HEK293T (cell line): ENCODE measurements at regions of chrX and their contacts with region 1.

Region 1: GRCh38 chrX:123779908-123780396 is 47.1 kb upstream of the THOC2 start:
- DNase-seq: peak; percentile 32

Region 2: GRCh38 chrX:123399709-123400108 is 380.2 kb before region 1 on chrX:
- CTCF ChIA-PET with region 1: no interaction called
- POLR2A ChIA-PET with region 1: no interaction called
- DNase-seq: no peak

Region 3: GRCh38 chrX:123732670-123733363 is 47.1 kb before region 1 on chrX and contains the start of gene THOC2:
- CTCF ChIA-PET with region 1: interaction called, 4 read pairs
- POLR2A ChIA-PET with region 1: interaction called, 10 read pairs
- DNase-seq: peak; percentile 87

Region 4: GRCh38 chrX:123743312-123743711 is 36.6 kb before region 1 on chrX:
- CTCF ChIA-PET with region 1: no interaction called
- POLR2A ChIA-PET with region 1: no interaction called
- DNase-seq: no peak

Region 5: DNA sequence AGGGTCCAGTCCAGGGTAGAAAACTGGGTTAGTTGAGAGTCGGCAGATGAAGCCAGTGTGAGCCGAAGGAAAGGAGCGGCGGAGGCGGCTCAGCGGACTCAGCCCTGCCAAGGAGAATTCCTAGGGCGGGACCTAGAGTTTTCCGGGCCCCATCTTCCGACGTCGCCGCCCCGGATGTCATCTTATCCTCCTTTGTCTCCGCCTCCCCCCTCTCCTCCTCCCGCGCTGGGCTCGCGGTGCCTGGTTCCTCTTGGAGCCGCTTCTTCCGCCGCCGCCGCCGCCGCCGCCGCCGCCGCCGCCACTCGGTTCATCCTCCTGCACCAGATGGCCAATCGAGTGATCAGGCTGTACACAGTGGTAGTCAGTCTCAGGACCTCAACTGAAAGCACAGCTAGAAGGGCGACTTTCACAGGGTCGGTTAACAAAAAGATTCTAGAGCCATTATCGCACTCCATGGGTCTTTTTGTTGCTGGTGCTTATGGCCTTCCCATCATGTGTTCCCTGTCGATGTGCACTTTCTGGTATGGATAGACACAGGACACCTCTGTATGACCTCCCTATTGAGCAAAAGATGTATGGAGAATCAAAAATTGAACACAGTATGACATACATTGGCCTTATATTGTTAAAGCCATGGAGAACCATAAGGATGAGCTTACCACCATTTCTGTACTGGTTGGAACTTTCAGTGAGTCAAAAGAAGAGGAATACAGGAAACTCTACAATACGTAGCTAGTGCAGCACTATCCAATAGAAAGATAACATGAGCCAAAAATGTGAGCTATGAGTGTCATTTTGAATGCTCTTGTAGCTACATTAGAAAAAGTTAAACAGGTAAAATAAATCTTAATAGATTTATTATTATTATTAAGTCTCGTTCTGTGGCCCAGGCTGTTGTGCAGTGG is 14.7 kb before region 1 on chrX:
- CTCF ChIA-PET with region 1: interaction called, 29 read pairs
- POLR2A ChIA-PET with region 1: interaction called, 13 read pairs
- DNase-seq: peak; percentile 88

Region 6: DNA sequence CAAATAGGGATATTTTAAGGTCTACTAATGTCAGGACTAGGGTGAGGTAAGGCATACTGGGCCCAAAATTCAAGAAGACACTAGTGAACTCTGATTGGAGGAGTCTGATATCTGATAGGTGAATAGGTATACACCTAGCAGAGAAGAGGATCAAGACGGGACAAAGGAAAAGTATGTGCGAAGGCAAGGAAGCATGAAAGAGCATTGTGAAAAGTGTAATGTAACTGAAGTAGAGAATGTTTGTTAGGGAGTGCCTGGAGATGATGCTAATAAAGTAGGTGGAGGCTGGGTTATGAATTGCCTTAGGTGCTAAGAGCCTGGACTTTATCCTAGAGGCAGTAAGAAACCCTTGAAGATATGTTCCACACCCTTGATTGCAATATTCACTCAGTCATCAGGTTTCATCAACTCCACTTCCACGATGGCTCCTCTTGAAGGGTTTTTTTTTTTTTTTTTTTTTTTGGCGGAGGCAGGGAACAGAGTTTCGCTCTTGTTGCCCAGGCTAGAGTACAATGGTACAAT is 30.0 kb after region 1 on chrX:
- CTCF ChIA-PET with region 1: interaction called, 10 read pairs
- POLR2A ChIA-PET with region 1: no interaction called
- DNase-seq: no peak

Region 7: DNA sequence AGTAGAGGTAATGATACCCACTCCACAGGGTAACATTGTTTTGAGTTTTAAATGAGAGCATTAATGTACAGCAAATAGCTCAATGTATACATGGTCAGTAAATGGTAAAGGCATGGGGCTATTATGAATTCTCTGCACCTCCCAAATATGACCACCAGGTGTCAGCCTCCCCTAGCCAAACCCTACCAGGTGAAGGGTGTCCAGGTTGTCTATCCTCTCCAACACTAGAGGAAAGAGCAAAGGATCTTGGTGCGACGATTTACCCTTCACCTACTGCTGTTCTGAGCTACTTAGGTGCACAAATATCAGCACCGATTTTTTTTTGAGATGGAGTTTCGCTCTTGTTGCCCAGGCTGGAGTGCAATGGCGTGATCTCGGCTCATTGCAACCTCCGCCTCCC is 53.4 kb after region 1 on chrX:
- CTCF ChIA-PET with region 1: interaction called, 16 read pairs
- POLR2A ChIA-PET with region 1: no interaction called
- DNase-seq: peak; percentile 84

Region 8: GRCh38 chrX:123846598-123847455 is 66.9 kb after region 1 on chrX:
- CTCF ChIA-PET with region 1: no interaction called
- POLR2A ChIA-PET with region 1: no interaction called
- DNase-seq: no peak

Region 9: GRCh38 chrX:123899701-123900100 is 119.7 kb after region 1 on chrX:
- CTCF ChIA-PET with region 1: no interaction called
- POLR2A ChIA-PET with region 1: no interaction called
- DNase-seq: no peak

Region 10: DNA sequence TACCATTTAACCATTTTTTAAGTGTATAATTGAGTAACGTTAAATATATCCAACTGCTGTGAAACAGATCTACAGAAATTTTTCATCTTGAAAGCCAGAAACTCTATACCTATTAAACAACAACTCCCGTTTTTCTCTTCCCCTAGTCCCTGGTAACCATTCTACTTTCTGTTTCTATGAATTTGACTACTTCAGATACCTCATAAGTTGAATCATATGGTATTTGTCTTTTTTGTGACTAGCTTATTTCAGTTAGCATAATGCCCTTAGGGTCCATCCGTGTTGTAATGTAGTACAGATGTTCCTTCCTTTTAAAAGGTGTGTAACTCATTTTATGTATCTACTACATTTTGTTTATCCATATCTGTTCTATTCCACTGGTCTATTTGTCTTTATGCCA is 230.2 kb after region 1 on chrX:
- CTCF ChIA-PET with region 1: interaction called, 13 read pairs
- POLR2A ChIA-PET with region 1: no interaction called
- DNase-seq: no peak